Panc1 (cell line): ENCODE measurements at regions of chr18 and their contacts with region 1.

Region 1: GRCh38 chr18:76373302-76373701 is 121.7 kb downstream of the ZNF516 start:
- DNase-seq: no peak
- ATAC-seq: no peak
- H3K4me3 ChIP-seq: no peak overlapping the region
- H3K27ac ChIP-seq: no peak overlapping the region
- H3K4me1 ChIP-seq: no peaks in the 10 kb centered on the region
- H3K27me3 ChIP-seq: no peaks in the 10 kb centered on the region
- CTCF ChIP-seq: no peak

Region 2: DNA sequence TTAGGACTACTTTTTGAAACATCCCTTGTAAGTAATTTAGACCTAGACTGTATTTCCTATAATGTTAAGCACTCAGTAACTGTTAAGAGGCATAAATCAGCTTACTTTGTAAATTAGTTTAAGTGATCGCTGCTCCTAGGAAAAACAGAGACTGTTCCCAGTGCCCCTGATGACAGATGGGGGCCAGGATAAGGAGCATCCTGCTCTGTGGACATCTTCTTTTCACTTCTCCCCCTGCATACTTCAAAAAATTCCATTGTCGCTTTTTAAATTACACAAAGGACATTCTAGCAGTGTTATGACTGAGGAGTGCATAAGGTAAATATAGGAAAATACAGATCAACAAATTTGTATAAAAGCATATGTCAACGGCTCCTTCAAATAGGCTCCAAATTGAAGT is 283.6 kb after region 1 on chr18:
- CTCF ChIA-PET with region 1: interaction called, 12 read pairs
- POLR2A ChIA-PET with region 1: no interaction called
- in situ Hi-C with region 1: no loop called
- intact Hi-C with region 1: no loop called
- DNase-seq: no peak
- ATAC-seq: no peak
- H3K4me3 ChIP-seq: no peak overlapping the region
- H3K27ac ChIP-seq: no peak overlapping the region
- H3K4me1 ChIP-seq: no peaks in the 10 kb centered on the region
- H3K27me3 ChIP-seq: peaks cover 38% of the 10 kb centered on the region
- CTCF ChIP-seq: no peak